ENCODE measurements at regions of chr5 and their contacts with region 1.

Region 1: DNA sequence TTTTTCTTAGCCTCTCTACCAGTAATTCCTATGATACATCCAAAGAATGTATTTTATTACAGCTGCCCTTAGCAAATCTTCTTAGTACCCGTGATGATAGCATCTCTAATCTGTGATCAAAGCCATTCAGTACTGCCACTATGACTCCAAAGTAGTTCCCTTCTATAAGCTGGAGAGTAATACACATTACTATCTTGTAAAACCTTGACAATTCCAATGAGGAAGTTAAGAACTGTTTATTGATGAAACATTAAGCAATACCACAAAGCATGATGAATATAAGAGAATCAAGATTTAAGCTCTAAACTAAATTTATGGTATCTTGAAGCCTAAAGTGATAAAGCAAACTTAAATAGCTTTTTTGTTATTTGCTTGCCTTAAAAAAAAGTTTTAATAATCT is 86.1 kb downstream of the SMIM23 start:
- DNase-seq: no peak
- CTCF ChIP-seq: no peak

Region 2: DNA sequence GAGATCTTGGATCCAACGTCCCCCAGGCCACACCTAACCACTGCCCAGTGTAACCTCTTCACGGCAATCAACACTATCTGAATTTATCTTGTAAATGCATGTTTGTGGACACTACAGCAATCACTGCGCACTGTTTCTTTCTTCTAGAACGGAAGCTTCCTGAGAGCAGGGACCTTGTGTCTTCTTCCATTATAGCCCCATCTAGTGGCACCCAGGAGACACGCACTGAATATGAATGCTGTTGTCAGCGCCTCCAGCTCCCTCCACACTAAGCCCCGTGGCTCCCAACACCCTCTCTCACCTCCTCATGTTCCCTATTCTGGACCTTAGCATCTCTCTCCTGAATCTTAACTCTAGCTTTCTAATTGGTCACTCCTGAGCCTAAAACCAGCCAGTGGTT is 13.4 kb before region 1 on chr5:
- CTCF ChIA-PET with region 1: interaction called, 15 read pairs
- POLR2A ChIA-PET with region 1: no interaction called
- DNase-seq: peak; percentile 44
- CTCF ChIP-seq: peak; percentile 34

Region 3: GRCh38 chr5:171882118-171882517 is 10.4 kb after region 1 on chr5:
- CTCF ChIA-PET with region 1: interaction called, 15 read pairs
- POLR2A ChIA-PET with region 1: no interaction called
- DNase-seq: no peak
- CTCF ChIP-seq: no peak

Measured in GM10248 (cell line).